ENCODE measurements at regions of chr6 and their contacts with region 1.

Region 1: DNA sequence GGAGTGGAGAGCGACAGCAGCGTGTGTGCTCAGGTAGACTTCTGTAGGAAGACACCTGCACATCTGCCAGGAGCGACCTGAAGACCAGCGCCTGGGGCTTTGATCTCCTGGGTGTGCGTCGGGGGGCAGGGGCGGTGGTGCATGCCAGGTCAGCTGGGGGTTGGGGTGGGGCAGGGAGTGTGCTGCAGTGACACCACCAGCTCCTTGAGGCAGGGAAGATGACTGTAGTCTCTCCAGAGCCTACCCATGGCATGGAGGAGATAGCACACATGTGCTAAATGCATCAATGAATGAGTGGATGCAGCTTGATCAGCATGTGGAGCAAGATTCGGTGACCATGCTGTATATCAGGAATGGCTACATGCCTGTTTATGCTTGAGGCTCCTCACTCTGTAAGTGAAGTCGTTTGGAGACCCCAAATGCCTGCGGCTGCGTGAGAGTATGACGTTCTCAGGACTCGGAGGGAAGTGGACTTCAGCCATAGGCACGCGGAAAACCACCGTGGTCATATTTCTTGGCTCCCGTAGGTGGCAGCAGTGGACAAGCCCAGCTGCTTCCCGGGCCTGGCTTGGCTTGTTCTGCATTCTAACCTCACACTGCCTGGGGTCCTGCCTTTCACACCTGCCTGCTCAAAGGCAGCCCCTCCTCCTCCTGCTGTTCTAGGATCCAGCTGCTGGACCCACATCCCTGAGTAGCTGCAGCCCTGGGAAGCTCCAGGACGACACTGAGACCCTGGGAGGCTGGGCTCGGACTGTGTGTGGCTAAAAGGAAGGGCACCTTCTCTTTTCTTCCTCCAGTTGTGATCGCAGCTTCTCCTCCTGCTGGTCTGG is 39.4 kb upstream of the KCNK16 start:
- DNase-seq: peak; percentile 49 to 88
- H3K4me3 ChIP-seq: no peak overlapping the region
- H3K27ac ChIP-seq: no peak overlapping the region
- H3K4me1 ChIP-seq: peaks cover 0 to 7% (median 2%) of the 10 kb centered on the region in 4 experiments; a peak in 4 of 7 replicates
- H3K27me3 ChIP-seq: no peaks in the 10 kb centered on the region
- CTCF ChIP-seq: peak; percentile 84 to 96 (median 89)
- EP300 ChIP-seq: no peak
- POLR2A ChIP-seq: no peak
- RAD21 ChIP-seq: peak; percentile 91 to 92

Region 2: GRCh38 chr6:39347906-39348585 is 13.8 kb before region 1 on chr6:
- CTCF ChIA-PET with region 1: interaction called, 89 read pairs
- POLR2A ChIA-PET with region 1: no interaction called
- DNase-seq: peak in 1 of 2 experiments; percentile 97
- H3K4me3 ChIP-seq: no peak overlapping the region
- H3K27ac ChIP-seq: no peak overlapping the region
- H3K4me1 ChIP-seq: peaks cover 5 to 10% (median 9%) of the 10 kb centered on the region in 4 experiments
- H3K27me3 ChIP-seq: no peaks in the 10 kb centered on the region
- CTCF ChIP-seq: peak; percentile 82 to 93 (median 84)
- EP300 ChIP-seq: no peak
- POLR2A ChIP-seq: no peak
- RAD21 ChIP-seq: peak; percentile 89 to 94

Region 3: DNA sequence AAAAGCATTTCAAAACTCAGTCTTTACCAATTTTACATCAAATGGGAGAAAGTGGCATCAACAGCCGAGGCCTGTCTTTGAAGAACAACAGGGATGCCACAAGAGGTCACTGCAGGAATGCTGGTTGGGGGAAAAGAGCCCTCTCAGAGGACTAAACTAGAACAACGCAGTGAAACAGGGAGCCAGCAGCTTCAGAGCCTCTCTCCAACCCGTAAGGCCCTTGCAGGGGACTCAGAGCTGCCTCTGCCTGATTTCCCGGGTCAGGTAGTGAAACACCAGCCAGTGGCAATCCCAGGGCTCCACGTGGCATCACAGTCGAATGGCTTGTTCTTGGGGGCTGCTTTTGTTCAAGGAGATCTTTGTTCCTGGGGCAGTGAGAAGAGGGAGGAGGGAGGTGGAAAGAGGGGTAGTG is 15.7 kb after region 1 on chr6:
- CTCF ChIA-PET with region 1: interaction called, 58 read pairs
- POLR2A ChIA-PET with region 1: no interaction called
- DNase-seq: peak; percentile 60 to 76
- H3K4me3 ChIP-seq: no peak overlapping the region
- H3K27ac ChIP-seq: no peak overlapping the region
- H3K4me1 ChIP-seq: peaks cover 0 to 3% (median under 1%) of the 10 kb centered on the region in 4 experiments; a peak in 2 of 7 replicates
- H3K27me3 ChIP-seq: no peaks in the 10 kb centered on the region; a peak in 1 of 7 replicates
- CTCF ChIP-seq: peak; percentile 63 to 91 (median 90)
- EP300 ChIP-seq: no peak
- POLR2A ChIP-seq: no peak
- RAD21 ChIP-seq: peak; percentile 99 to 100

Region 4: DNA sequence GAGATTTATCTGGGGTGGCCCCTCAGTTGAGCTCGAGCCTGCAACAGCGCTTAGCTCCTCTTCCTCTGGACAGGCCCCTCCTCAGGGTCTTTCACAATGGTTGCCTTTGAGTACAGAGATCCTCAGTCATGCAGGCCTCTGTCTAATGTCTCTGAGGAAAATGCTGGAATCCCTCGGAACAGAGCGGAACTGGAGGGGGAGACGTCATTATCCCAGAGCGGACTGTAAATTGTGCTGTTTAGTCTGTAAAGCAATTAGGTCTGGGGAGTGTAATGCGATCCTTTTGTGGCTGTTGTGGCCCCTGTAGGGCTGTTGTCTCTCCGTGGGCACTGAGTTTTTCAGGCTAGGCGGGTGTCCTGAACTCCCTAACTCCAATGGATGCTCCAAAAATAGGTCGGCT is 415.3 kb after region 1 on chr6:
- CTCF ChIA-PET with region 1: interaction called, 10 read pairs
- POLR2A ChIA-PET with region 1: no interaction called
- DNase-seq: no peak
- H3K4me3 ChIP-seq: no peak overlapping the region
- H3K27ac ChIP-seq: no peak overlapping the region
- H3K4me1 ChIP-seq: peaks cover 0 to 7% (median 3%) of the 10 kb centered on the region in 4 experiments; a peak in 3 of 7 replicates
- H3K27me3 ChIP-seq: no peaks in the 10 kb centered on the region; a peak in 1 of 7 replicates
- CTCF ChIP-seq: no peak
- EP300 ChIP-seq: no peak
- POLR2A ChIP-seq: no peak
- RAD21 ChIP-seq: no peak

Region 5: DNA sequence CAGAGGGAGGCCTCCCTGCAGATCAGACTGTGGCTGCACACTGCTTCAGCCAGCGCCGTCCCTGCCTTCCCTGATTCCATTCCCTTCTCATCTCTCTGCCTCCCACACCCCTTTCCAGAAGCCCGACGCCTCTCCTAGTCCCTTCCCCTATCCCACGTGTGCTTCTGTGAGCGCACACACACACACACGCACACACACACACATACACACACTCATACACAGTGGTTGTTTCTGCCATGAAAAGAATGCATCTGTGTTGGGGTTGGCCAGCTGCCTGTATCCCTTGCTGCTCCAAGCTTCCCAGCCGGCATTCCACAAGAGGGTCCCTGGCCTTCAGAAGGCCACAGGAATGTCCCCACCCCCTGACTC is 520.6 kb after region 1 on chr6:
- CTCF ChIA-PET with region 1: interaction called, 10 read pairs
- POLR2A ChIA-PET with region 1: no interaction called
- DNase-seq: no peak
- H3K4me3 ChIP-seq: no peak overlapping the region
- H3K27ac ChIP-seq: no peak overlapping the region
- H3K4me1 ChIP-seq: no peaks in the 10 kb centered on the region
- H3K27me3 ChIP-seq: no peaks in the 10 kb centered on the region
- CTCF ChIP-seq: no peak
- EP300 ChIP-seq: no peak
- POLR2A ChIP-seq: no peak
- RAD21 ChIP-seq: no peak

Region 6: DNA sequence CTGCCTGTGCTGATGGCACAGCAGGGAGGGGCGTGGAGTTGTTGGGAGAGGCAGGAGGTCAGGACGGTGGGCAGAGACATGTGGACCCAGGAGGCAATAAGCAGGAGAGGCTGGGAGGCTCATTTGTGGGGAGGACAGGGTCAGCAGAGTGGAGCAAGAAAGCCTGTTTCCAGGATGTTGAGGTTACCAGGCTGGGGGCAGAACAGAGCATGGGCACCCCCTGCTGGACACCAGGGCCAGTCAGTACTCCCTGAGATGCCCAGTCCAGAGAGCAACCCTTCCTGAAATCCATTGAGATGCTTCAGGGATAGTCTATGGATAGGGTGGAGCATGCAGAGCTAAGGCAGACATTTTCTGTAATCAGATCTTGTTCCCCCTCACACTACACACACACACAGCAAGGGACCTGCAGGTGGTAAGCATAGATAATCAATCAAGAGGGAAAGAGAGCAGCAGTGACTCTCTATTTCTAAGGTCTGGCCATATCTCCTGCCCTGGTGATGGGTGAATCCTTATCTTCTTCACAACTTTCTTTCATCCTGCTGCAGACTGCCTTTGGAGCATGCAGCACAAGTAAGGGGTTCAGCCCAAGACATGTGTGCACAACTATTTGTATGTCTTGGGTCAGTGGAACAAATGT is 530.7 kb after region 1 on chr6:
- CTCF ChIA-PET with region 1: interaction called, 51 read pairs
- POLR2A ChIA-PET with region 1: no interaction called
- DNase-seq: peak; percentile 17 to 83
- H3K4me3 ChIP-seq: no peak overlapping the region
- H3K27ac ChIP-seq: no peak overlapping the region
- H3K4me1 ChIP-seq: peaks cover 0 to 6% (median 2%) of the 10 kb centered on the region in 4 experiments; a peak in 2 of 7 replicates
- H3K27me3 ChIP-seq: no peaks in the 10 kb centered on the region
- CTCF ChIP-seq: peak; percentile 82 to 95 (median 91)
- EP300 ChIP-seq: no peak
- POLR2A ChIP-seq: no peak
- RAD21 ChIP-seq: peak; percentile 91 to 92

Measured in H1 (cell line).